ENCODE measurements at regions of chr1 and their contacts with region 1.

Region 1: GRCh38 chr1:42846257-42847110 is at the start of gene ZNF691:
- DNase-seq: peak; percentile 94 to 95
- ATAC-seq: peak; percentile 100
- H3K4me3 ChIP-seq: peak within 1 kb of the TSS; percentile 87
- H3K27ac ChIP-seq: peak within 1 kb of the TSS; percentile 89 to 94
- H3K4me1 ChIP-seq: peaks cover 15% of the 10 kb centered on the region; the same call in 2 of the 3 replicates
- CTCF ChIP-seq: no peak
- EP300 ChIP-seq: no peak
- POLR2A ChIP-seq: peak; percentile 39
- RAD21 ChIP-seq: no peak
- polyA plus RNA-seq, gene ZNF691: 4.8 and 6.6 TPM in 2 replicates

Region 2: DNA sequence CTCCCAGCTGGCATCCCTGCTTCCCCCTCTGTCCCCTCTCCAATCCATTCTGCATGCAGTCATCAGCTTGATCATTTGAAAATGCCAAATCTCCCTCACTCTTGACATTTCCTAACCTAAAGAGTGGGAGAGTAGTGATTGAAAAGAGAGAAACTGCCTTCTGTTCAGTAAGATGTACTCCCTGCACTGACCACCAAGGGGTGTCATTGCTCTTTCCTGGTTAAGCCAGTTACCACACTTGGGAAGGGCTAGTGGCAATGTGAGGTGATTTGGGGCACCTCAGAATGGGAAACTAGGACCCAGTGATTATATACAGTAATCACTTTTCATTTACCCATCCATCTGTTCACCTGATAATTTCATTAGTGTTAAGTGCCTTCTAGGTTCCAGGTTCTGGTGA is 68.6 kb before region 1 on chr1:
- CTCF ChIA-PET with region 1: interaction called, 11 read pairs
- POLR2A ChIA-PET with region 1: no interaction called
- DNase-seq: peak; percentile 43 to 60
- ATAC-seq: peak; percentile 81 to 83; a peak in 5 of 6 replicates
- H3K4me3 ChIP-seq: no peak overlapping the region
- H3K27ac ChIP-seq: no peak overlapping the region
- H3K4me1 ChIP-seq: no peaks in the 10 kb centered on the region
- CTCF ChIP-seq: peak; percentile 61
- EP300 ChIP-seq: no peak
- POLR2A ChIP-seq: no peak
- RAD21 ChIP-seq: peak; percentile 74 to 82

Region 3: GRCh38 chr1:42816585-42817434 is 29.7 kb before region 1 on chr1 and contains the starts of genes ERMAP and SVBP:
- CTCF ChIA-PET with region 1: interaction called, 5 read pairs
- POLR2A ChIA-PET with region 1: interaction called, 12 read pairs
- DNase-seq: peak; percentile 60 to 82
- ATAC-seq: peak; percentile 96 to 97
- H3K4me3 ChIP-seq: peak within 1 kb of the TSS; percentile 52
- H3K27ac ChIP-seq: peak within 1 kb of the TSS; percentile 97 to 98
- H3K4me1 ChIP-seq: peaks cover 31% of the 10 kb centered on the region; the same call in 2 of the 3 replicates
- CTCF ChIP-seq: no peak
- EP300 ChIP-seq: no peak
- POLR2A ChIP-seq: peak; percentile 31
- RAD21 ChIP-seq: no peak
- polyA plus RNA-seq, gene ERMAP: 9.5 and 10.7 TPM in 2 replicates
- polyA plus RNA-seq, gene SVBP: 22.6 and 24.8 TPM in 2 replicates

Region 4: DNA sequence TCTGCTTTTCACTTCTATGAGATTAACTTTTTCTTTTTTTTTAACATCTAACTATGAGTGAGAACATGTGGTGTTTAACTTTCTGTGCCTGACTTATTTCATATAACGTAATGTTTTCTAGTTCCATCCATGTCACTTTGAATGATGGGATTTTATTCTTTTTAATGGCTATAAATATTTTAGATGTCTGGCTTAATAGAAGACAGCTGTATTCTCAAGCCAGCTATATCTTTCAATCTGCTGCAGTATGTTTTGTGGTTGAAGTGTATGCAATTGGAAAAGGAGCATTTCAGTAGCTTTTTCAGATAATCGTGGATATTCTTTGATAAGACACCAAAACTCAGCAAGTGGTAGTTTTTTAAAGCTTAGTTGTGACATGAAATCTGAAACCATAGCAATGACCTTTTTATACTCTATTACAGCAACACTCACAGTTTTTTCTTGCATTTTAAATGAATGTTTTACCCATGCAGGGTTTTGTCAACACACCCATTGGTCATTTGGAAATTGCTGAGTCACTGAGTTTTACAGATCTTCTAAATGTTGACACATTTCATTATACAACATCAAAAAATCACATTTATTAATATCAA is 23.6 kb before region 1 on chr1:
- CTCF ChIA-PET with region 1: interaction called, 4 read pairs
- POLR2A ChIA-PET with region 1: interaction called, 14 read pairs
- DNase-seq: peak in 1 of 2 experiments; percentile 25
- ATAC-seq: no peak
- H3K4me3 ChIP-seq: no peak overlapping the region
- H3K27ac ChIP-seq: peak overlapping the region; percentile 70 to 77
- H3K4me1 ChIP-seq: peaks cover 34% of the 10 kb centered on the region
- CTCF ChIP-seq: no peak
- EP300 ChIP-seq: no peak
- POLR2A ChIP-seq: no peak
- RAD21 ChIP-seq: no peak